GM12878 (cell line): ENCODE measurements at regions of chr13 and their contacts with region 1.

Region 1: GRCh38 chr13:33799950-33800592 is 17.9 kb upstream of the RFC3 start:
- DNase-seq: no peak
- ATAC-seq: peak; percentile 62
- H3K4me3 ChIP-seq: no peak overlapping the region
- H3K27ac ChIP-seq: no peak overlapping the region
- H3K4me1 ChIP-seq: peaks cover 8% of the 10 kb centered on the region
- H3K27me3 ChIP-seq: no peaks in the 10 kb centered on the region
- CTCF ChIP-seq: peak; percentile 17 to 48 (median 35); a peak in 4 of 6 replicates
- EP300 ChIP-seq: no peak
- POLR2A ChIP-seq: no peak
- RAD21 ChIP-seq: peak; percentile 51

Region 2: DNA sequence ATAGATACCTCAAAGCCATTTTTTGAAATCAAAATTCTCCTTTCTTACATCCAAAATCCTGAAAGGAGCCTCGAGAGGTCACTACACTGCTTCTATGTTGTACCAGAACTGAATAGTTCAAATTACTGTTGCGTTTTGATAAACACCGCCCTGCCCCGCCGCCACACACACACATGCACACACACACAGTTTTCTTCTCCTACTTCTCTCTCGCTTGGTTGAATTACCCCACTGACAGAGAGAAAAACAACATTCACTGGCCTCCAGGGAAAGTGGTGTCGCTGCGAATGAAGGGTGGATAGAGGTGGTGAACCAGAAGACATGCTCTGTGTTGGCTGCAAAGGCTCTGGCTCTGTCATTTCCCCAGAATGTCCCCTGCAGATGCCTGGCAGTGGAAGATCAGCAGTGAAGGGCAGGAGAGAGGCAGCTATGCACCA is 165.5 kb before region 1 on chr13:
- CTCF ChIA-PET with region 1: no interaction called
- POLR2A ChIA-PET with region 1: no interaction called
- RAD21 ChIA-PET with region 1: no interaction called
- SMC1A ChIA-PET with region 1: no interaction called
- in situ Hi-C with region 1: no loop called
- intact Hi-C with region 1: no loop called
- DNase-seq: no peak
- ATAC-seq: no peak
- H3K4me3 ChIP-seq: no peak overlapping the region
- H3K27ac ChIP-seq: no peak overlapping the region
- H3K4me1 ChIP-seq: peaks cover 12% of the 10 kb centered on the region
- H3K27me3 ChIP-seq: no peaks in the 10 kb centered on the region
- CTCF ChIP-seq: no peak
- EP300 ChIP-seq: no peak
- POLR2A ChIP-seq: no peak
- RAD21 ChIP-seq: no peak

Region 3: GRCh38 chr13:33651813-33652212 is 148.3 kb before region 1 on chr13:
- CTCF ChIA-PET with region 1: no interaction called
- POLR2A ChIA-PET with region 1: no interaction called
- RAD21 ChIA-PET with region 1: no interaction called
- SMC1A ChIA-PET with region 1: no interaction called
- in situ Hi-C with region 1: no loop called
- intact Hi-C with region 1: no loop called
- DNase-seq: no peak
- ATAC-seq: no peak
- H3K4me3 ChIP-seq: no peak overlapping the region
- H3K27ac ChIP-seq: no peak overlapping the region
- H3K4me1 ChIP-seq: no peaks in the 10 kb centered on the region
- H3K27me3 ChIP-seq: no peaks in the 10 kb centered on the region
- CTCF ChIP-seq: no peak
- EP300 ChIP-seq: no peak
- POLR2A ChIP-seq: no peak
- RAD21 ChIP-seq: no peak

Region 4: GRCh38 chr13:33787051-33787591 is 12.9 kb before region 1 on chr13:
- CTCF ChIA-PET with region 1: interaction called, 41 read pairs
- POLR2A ChIA-PET with region 1: interaction called, 3 read pairs
- RAD21 ChIA-PET with region 1: interaction called, 9 read pairs
- SMC1A ChIA-PET with region 1: interaction called, 53 read pairs
- in situ Hi-C with region 1: no loop called
- intact Hi-C with region 1: no loop called
- DNase-seq: peak; percentile 33
- ATAC-seq: peak; percentile 91
- H3K4me3 ChIP-seq: peak overlapping the region; percentile 55
- H3K27ac ChIP-seq: peak overlapping the region; percentile 47
- H3K4me1 ChIP-seq: peaks cover 6% of the 10 kb centered on the region; the same call in 1 of the 2 replicates
- H3K27me3 ChIP-seq: no peaks in the 10 kb centered on the region
- CTCF ChIP-seq: no peak
- EP300 ChIP-seq: no peak
- POLR2A ChIP-seq: no peak
- RAD21 ChIP-seq: no peak